ENCODE measurements at regions of chr7 and their contacts with region 1.

Region 1: DNA sequence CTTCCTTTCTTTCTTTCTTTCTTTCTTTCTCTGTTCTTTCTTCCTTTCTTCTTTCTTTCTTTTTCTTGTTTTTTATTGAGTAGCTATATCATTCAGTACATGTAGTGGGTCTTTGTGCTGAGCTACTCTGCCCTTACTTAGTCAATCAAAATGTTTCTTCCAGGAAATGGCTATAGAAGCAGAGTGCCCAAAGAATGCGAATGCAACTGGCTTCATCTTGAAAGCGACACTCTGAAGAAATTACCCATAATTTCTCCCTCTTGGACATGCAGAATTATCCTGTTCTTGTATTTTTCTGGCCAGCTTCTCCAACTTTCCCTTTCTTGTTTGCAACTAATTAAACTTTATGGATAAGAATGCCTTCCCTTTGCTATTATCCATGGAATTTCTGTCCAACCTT is 441.5 kb downstream of the MAGI2 start:
- DNase-seq: no peak
- H3K4me3 ChIP-seq: no peak overlapping the region
- CTCF ChIP-seq: no peak

Region 2: GRCh38 chr7:78568690-78569089 is 443.2 kb before region 1 on chr7:
- in situ Hi-C with region 1: loop called (anchors 5 kb)
- DNase-seq: no peak
- H3K4me3 ChIP-seq: no peak overlapping the region
- CTCF ChIP-seq: no peak

Region 3: GRCh38 chr7:79050603-79051002 is 38.7 kb after region 1 on chr7:
- in situ Hi-C with region 1: no loop called
- DNase-seq: peak; percentile 70
- H3K4me3 ChIP-seq: no peak overlapping the region
- CTCF ChIP-seq: no peak

Region 4: GRCh38 chr7:79436378-79436777 is 424.5 kb after region 1 on chr7:
- in situ Hi-C with region 1: no loop called
- DNase-seq: no peak
- H3K4me3 ChIP-seq: no peak overlapping the region
- CTCF ChIP-seq: no peak